Activated T-helper 2 cell treated with anti-CD3 and anti-CD28 coated beads, Interferon-gamma antibody, Interleukin-2, Interleukin-4, amounts not matched to agents 10 μg/mL and 5 μg/mL and 100 μg/mL, durations not matched to agents 14 hours and 24 hours and 36 hours (primary cell): ENCODE measurements at regions of chr10 and their contacts with region 1.

Region 1: DNA sequence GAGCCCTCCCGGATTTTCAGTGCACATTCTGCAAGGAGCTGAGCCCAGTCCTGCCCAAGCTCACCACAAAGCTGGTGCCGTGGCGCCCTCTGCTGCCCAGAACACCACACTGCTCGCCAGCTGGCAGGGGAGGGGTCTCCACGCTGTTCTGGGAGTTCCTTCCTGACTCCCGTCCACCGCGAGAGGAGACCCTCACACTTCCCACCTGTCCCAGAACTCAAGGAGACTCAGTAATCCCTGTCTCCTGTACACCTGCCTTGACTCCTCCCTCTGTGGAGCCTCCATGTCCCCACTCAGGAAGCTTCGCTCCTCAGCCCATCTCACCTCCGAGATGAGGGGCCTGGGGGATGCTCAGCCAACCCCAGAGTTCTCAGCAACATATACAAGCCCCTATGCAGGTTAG is 11.3 kb downstream of the C10orf105 start:
- DNase-seq: peak; percentile 48
- H3K4me3 Mint-ChIP-seq: no peak overlapping the region
- H3K27ac Mint-ChIP-seq: no peak overlapping the region
- H3K4me1 Mint-ChIP-seq: peaks cover 18% of the 10 kb centered on the region
- H3K27me3 Mint-ChIP-seq: no peaks in the 10 kb centered on the region

Region 2: GRCh38 chr10:71383972-71384687 is 324.2 kb before region 1 on chr10:
- intact Hi-C with region 1: loop called (anchors 5 kb)
- DNase-seq: peak; percentile 64
- H3K4me3 Mint-ChIP-seq: no peak overlapping the region
- H3K27ac Mint-ChIP-seq: no peak overlapping the region
- H3K4me1 Mint-ChIP-seq: no peaks in the 10 kb centered on the region
- H3K27me3 Mint-ChIP-seq: peaks cover 18% of the 10 kb centered on the region